Endothelial cell of umbilical vein (primary cell): ENCODE measurements at regions of chr2 and their contacts with region 1.

Region 1: DNA sequence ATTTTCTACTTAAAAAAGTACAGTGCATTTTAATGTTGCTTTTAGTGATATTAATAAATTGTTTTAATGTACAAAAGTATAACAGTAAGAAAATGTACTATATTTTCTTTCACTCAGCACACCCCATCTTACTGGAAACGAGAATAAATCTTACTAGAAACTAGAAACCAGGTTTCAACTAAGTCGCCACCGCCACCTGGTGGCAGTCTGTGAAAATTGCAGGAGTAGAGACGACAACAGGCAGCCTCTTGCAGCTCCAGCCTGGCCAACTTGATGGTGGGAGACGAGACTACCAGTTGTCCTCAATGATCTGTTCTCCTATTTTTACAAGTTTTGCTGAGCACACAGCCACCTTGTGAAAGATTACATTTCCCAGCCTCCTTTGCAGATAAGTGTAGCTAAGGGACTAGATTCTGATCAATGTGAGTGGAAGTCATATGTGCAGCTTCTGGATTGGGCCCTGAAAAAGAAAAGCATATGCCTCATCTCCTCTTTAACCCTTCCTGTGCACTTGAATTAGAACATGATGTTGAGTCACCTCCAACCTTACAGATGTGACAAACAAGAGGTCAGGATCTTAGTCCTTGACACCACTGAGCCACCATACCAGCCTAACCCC is 8.7 kb downstream of the OTOF start:
- DNase-seq: peak; percentile 61
- H3K4me3 ChIP-seq: no peak overlapping the region
- H3K27ac ChIP-seq: no peak overlapping the region
- H3K4me1 ChIP-seq: no peaks in the 10 kb centered on the region
- H3K27me3 ChIP-seq: no peaks in the 10 kb centered on the region
- CTCF ChIP-seq: peak; percentile 62 to 79
- POLR2A ChIP-seq: no peak

Region 2: GRCh38 chr2:26068602-26069298 is 400.5 kb before region 1 on chr2:
- CTCF ChIA-PET with region 1: no interaction called
- POLR2A ChIA-PET with region 1: no interaction called
- dilution Hi-C with region 1: no loop called
- intact Hi-C with region 1: no loop called
- DNase-seq: peak; percentile 86
- H3K4me3 ChIP-seq: no peak overlapping the region
- H3K27ac ChIP-seq: peak overlapping the region; percentile 57
- H3K4me1 ChIP-seq: peaks cover 20% of the 10 kb centered on the region
- H3K27me3 ChIP-seq: no peaks in the 10 kb centered on the region
- CTCF ChIP-seq: no peak
- POLR2A ChIP-seq: no peak

Region 3: DNA sequence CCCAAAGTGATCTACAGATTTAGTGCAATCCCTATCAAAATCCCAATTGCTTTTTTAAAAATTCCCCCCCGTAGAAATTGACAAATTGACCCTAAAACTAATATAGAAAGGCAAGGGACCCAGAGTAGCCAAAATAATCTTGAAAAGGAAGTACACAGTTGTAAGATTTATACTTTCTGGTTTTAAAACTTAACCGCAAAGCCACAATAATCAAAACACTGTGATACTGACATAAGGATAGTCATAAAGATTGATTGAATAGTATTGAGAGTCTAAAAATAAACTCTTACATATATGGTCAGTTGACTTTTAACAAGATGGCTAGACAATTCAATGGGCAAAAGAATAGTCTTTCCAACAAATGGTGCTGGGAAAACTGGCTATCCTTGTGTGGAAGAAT is 355.1 kb before region 1 on chr2:
- CTCF ChIA-PET with region 1: no interaction called
- POLR2A ChIA-PET with region 1: no interaction called
- dilution Hi-C with region 1: no loop called
- intact Hi-C with region 1: no loop called
- DNase-seq: no peak
- H3K4me3 ChIP-seq: no peak overlapping the region
- H3K27ac ChIP-seq: no peak overlapping the region
- H3K4me1 ChIP-seq: peaks cover 9% of the 10 kb centered on the region
- H3K27me3 ChIP-seq: no peaks in the 10 kb centered on the region
- CTCF ChIP-seq: no peak
- POLR2A ChIP-seq: no peak

Region 4: GRCh38 chr2:26244309-26245121 is 224.7 kb before region 1 on chr2 and contains the starts of genes HADHA and HADHB:
- CTCF ChIA-PET with region 1: no interaction called
- POLR2A ChIA-PET with region 1: no interaction called
- dilution Hi-C with region 1: no loop called
- intact Hi-C with region 1: loop called (anchors 5 kb)
- DNase-seq: peak; percentile 94
- H3K4me3 ChIP-seq: peak within 1 kb of the TSS; percentile 80 to 92 (median 85)
- H3K27ac ChIP-seq: peak within 1 kb of the TSS; percentile 94
- H3K4me1 ChIP-seq: peaks cover 19% of the 10 kb centered on the region
- H3K27me3 ChIP-seq: no peaks in the 10 kb centered on the region
- CTCF ChIP-seq: peak in 1 of 2 donors; percentile 34
- POLR2A ChIP-seq: peak; percentile 78
- total RNA-seq, gene HADHA: 151 and 158 TPM in 2 replicates
- total RNA-seq, gene HADHB: 85.6 and 100 TPM in 2 replicates

Region 5: GRCh38 chr2:26503231-26503880 is 34.2 kb after region 1 on chr2:
- CTCF ChIA-PET with region 1: interaction called, 15 read pairs
- POLR2A ChIA-PET with region 1: no interaction called
- dilution Hi-C with region 1: no loop called
- intact Hi-C with region 1: loop called (anchors 1 kb)
- DNase-seq: peak; percentile 71
- H3K4me3 ChIP-seq: peak overlapping the region; percentile 8 to 23 (median 9)
- H3K27ac ChIP-seq: no peak overlapping the region
- H3K4me1 ChIP-seq: no peaks in the 10 kb centered on the region
- H3K27me3 ChIP-seq: peaks cover 0 to under 1% of the 10 kb centered on the region in 2 experiments
- CTCF ChIP-seq: peak; percentile 90 to 95
- POLR2A ChIP-seq: no peak

Region 6: GRCh38 chr2:26555246-26556133 is 86.3 kb after region 1 on chr2:
- CTCF ChIA-PET with region 1: no interaction called
- POLR2A ChIA-PET with region 1: no interaction called
- dilution Hi-C with region 1: no loop called
- intact Hi-C with region 1: loop called (anchors 1 kb)
- DNase-seq: no peak
- H3K4me3 ChIP-seq: no peak overlapping the region
- H3K27ac ChIP-seq: no peak overlapping the region
- H3K4me1 ChIP-seq: no peaks in the 10 kb centered on the region
- H3K27me3 ChIP-seq: peaks cover 7 to 27% of the 10 kb centered on the region in 2 experiments
- CTCF ChIP-seq: no peak
- POLR2A ChIP-seq: no peak

Region 7: DNA sequence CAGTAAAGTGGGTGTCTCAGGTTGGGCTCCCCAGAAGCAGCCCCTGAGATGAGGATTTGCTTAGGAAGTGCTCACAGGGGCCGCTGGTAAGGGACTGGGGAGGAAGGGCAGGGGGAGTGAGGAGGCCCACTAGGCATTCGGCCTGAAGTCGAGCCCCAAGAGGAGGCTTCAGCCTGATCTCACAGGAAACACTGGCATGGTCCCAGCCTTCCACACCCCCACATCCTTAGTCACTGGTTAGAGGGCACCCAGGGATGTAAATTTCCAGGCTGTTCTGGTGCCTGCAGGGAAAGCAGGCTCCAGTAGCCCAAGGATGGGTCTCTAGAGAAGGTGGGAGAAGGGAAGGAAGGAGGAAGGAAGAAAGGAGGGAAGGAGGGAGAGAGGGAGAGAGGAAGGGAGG is 201.0 kb after region 1 on chr2:
- CTCF ChIA-PET with region 1: no interaction called
- POLR2A ChIA-PET with region 1: no interaction called
- dilution Hi-C with region 1: no loop called
- intact Hi-C with region 1: no loop called
- DNase-seq: no peak
- H3K4me3 ChIP-seq: no peak overlapping the region
- H3K27ac ChIP-seq: no peak overlapping the region
- H3K4me1 ChIP-seq: no peaks in the 10 kb centered on the region
- H3K27me3 ChIP-seq: peaks cover 9 to 13% of the 10 kb centered on the region in 2 experiments
- CTCF ChIP-seq: no peak
- POLR2A ChIP-seq: no peak